ENCODE measurements at regions of chr21 and their contacts with region 1.

Region 1: GRCh38 chr21:42220138-42220701 is 1.3 kb downstream of the ABCG1 start:
- DNase-seq: peak; percentile 84
- ATAC-seq: peak; percentile 39
- H3K4me3 ChIP-seq: peak overlapping the region; percentile 66
- H3K27ac ChIP-seq: no peak overlapping the region
- H3K4me1 ChIP-seq: peaks cover 2% of the 10 kb centered on the region; the same call in 1 of the 2 replicates
- H3K27me3 ChIP-seq: no peaks in the 10 kb centered on the region
- CTCF ChIP-seq: no peak

Region 2: DNA sequence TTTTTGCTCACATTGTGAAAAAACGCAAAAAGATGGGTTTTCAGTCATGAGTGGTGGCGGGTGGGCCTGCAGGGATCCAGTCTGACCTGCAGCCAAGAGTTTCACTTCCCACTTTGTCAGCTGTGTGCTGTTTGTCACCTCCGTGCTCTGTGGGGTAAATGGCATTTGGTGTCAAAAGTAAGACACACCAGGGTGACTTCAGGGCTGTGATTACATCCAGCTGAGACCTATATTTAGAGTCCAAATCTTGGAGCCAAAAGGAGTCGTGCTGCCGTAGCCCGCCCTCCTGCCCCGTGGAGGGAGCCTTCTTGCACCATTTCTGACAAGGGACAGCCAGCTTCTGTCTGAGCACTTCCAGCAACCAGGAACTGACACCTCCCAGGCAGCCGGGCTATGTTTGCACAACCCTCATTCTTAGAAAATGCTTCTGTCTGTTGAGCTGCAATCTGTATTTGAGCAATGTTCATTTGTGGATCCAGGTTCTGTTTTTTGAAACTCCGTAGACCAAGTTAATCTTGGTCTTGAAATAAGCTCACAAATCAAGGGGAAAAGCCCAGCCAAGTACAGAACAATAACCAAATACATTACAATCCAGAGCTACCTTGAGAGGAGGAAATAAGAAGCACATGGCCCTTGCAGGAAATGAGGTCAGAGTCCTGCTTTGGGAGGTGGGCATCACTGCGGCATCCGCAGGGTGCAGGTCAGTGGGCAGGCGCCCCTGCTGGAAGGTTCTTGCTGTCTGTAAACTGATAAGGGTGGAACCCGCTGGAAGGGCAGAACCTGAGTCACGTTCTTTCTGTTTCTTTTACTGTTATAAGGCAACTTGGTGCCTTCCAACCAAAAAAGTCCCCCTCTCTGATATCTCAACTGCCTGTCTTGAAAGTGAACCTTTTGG is 13.1 kb after region 1 on chr21:
- CTCF ChIA-PET with region 1: interaction called, 5 read pairs
- POLR2A ChIA-PET with region 1: interaction called, 10 read pairs
- intact Hi-C with region 1: no loop called
- DNase-seq: peak; percentile 13
- ATAC-seq: peak; percentile 10
- H3K4me3 ChIP-seq: no peak overlapping the region
- H3K27ac ChIP-seq: no peak overlapping the region
- H3K4me1 ChIP-seq: peaks cover 20% of the 10 kb centered on the region
- H3K27me3 ChIP-seq: no peaks in the 10 kb centered on the region
- CTCF ChIP-seq: 0 out of 2 replicates have a peak, but pooled peaks have one; percentile 15